Left lung (tissue), 14 donors: ENCODE measurements at regions of chr11 and their contacts with region 1.

Region 1: DNA sequence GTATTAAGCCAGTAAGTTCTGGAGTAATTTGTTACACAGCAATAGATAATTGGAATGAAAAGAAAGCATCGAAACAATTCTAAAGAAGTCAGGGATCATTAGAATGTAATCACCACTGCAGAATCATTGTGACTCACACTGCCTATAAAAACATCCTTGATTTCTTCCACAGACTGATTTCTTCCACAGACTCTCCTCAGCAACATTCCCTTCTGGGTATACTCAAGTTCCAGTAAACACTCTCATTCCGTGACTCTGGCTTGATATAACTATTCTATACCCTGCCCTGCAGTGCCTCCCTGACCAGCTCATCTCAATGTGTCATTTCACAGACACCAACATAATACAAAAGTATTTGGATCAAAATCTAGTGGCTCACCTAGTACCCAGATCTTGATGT is 120.5 kb downstream of the BBOX1 start:
- DNase-seq: no peak
- ATAC-seq: no peak
- H3K4me3 ChIP-seq: no peak overlapping the region
- H3K27ac ChIP-seq: no peak overlapping the region
- H3K4me1 ChIP-seq: no peaks in the 10 kb centered on the region
- H3K27me3 ChIP-seq: peaks cover 0 to 42% of the 10 kb centered on the region in 2 donors
- CTCF ChIP-seq: no peak

Region 2: DNA sequence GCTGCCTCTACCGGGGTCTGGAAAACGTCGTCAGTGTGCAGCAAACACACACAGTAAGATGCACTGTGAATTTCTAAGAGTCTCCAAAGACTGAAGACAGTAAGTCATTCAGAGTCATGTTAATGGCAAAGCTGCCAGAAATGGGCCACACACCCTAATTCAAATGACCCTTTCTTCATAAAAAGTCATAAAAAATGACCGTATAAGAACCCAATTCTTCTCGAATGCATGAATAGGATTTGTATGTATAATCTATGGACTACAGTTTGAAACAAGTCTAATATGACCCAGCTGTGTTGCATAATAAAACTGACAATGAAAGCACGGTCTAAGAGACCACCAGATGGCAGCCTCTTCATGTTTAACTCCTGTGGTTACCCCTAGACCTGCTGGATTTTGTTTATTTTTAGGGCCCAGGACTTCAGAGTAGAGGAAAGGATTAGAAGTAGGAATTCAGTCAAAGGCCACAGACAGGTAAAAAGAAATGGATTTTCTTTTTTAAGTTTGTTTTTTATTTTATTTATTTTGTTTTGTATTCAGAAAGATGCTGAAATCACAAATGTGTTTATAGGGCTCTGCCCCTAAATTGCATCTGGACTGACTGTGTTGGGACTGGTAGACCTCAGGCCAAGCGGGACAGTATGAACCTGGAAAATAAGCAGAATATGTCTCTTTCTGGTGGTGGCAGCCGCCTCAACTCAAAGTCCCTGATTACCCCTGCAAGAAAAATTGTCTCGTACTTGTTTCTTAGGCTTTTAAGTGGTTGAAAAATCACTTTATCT is 407.2 kb before region 1 on chr11:
- intact Hi-C with region 1: loop called in 1 of 2 experiments (anchors 10 kb)
- DNase-seq: peak in 2 of 4 donors; percentile 48 to 76
- ATAC-seq: peak; percentile 85
- H3K4me3 ChIP-seq: no peak overlapping the region
- H3K27ac ChIP-seq: no peak overlapping the region
- H3K4me1 ChIP-seq: no peaks in the 10 kb centered on the region
- H3K27me3 ChIP-seq: no peaks in the 10 kb centered on the region
- CTCF ChIP-seq: peak; percentile 39 to 59

Region 3: GRCh38 chr11:26867286-26867685 is 293.8 kb before region 1 on chr11:
- intact Hi-C with region 1: no loop called
- DNase-seq: peak in 1 of 4 donors; percentile 46
- ATAC-seq: no peak
- H3K4me3 ChIP-seq: no peak overlapping the region
- H3K27ac ChIP-seq: no peak overlapping the region
- H3K4me1 ChIP-seq: no peaks in the 10 kb centered on the region
- H3K27me3 ChIP-seq: no peaks in the 10 kb centered on the region
- CTCF ChIP-seq: no peak